ENCODE measurements at regions of chr2 and their contacts with region 1.

Region 1: GRCh38 chr2:197310271-197310985 is at the start of gene ANKRD44:
- DNase-seq: peak; percentile 79 to 94 (median 90)
- H3K4me3 ChIP-seq: peak within 1 kb of the TSS; percentile 59 to 92 (median 78)
- H3K27ac ChIP-seq: peak within 1 kb of the TSS; percentile 57 to 95 (median 87)
- H3K27me3 ChIP-seq: no peaks in the 10 kb centered on the region
- CTCF ChIP-seq: peak in 49 of 56 donors; percentile 23 to 69 (median 51)
- total RNA-seq, gene ANKRD44: 20.2 to 68.1 (median 34.7) TPM

Region 2: GRCh38 chr2:197113275-197113711 is 197.1 kb before region 1 on chr2:
- intact Hi-C with region 1: loop called (anchors 5 to 10 kb)
- DNase-seq: no peak
- H3K4me3 ChIP-seq: no peak overlapping the region
- H3K27ac ChIP-seq: peak overlapping the region in 30 of 59 donors; percentile 0 to 74 (median 26)
- H3K27me3 ChIP-seq: no peaks in the 10 kb centered on the region
- CTCF ChIP-seq: peak; percentile 58 to 91 (median 77)

Region 3: GRCh38 chr2:197130318-197130717 is 180.1 kb before region 1 on chr2:
- intact Hi-C with region 1: loop called in 1 of 2 experiments (anchors 10 kb)
- DNase-seq: no peak
- H3K4me3 ChIP-seq: no peak overlapping the region
- H3K27ac ChIP-seq: peak overlapping the region in 4 of 59 donors; percentile 6 to 25 (median 12)
- H3K27me3 ChIP-seq: no peaks in the 10 kb centered on the region
- CTCF ChIP-seq: no peak

Region 4: DNA sequence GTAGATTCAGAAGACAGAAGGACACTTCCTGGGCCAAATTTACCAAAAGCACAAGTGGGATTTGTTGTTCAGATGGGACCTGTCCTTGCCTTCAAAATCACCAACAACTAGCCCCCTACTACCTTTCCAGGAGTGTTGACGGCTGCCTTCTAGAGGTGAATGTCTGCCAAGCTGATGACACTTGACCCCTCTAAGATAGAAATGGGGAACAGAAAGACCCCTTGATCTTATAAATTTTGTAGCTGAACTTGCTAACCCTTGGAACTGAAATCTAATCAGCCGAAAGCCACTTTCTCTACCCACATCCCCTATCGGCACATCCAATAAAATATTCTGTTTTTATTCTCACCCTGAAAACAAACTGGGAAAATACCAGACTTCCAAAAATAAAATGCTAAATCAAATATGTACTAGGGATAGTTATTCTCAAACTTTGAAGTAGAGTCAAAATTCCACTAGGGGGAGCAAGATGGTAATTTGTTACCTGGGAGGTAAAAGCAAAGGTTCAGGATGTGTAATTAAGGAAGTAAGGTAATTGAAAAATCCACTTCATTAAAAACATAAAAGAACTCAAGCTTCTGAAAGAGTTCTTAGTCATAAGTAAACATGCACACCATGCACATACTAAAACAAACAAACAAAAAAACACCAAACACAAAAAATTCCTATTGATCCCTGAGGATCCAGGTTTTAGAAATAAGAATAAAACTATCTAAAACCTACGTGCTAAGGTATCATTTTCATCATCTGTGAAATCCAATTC is 119.1 kb before region 1 on chr2:
- intact Hi-C with region 1: loop called (anchors 1 to 5 kb)
- DNase-seq: no peak
- H3K4me3 ChIP-seq: no peak overlapping the region
- H3K27ac ChIP-seq: peak overlapping the region in 1 of 59 donors; percentile 6
- H3K27me3 ChIP-seq: no peaks in the 10 kb centered on the region
- CTCF ChIP-seq: peak; percentile 65 to 88 (median 77)

Region 5: DNA sequence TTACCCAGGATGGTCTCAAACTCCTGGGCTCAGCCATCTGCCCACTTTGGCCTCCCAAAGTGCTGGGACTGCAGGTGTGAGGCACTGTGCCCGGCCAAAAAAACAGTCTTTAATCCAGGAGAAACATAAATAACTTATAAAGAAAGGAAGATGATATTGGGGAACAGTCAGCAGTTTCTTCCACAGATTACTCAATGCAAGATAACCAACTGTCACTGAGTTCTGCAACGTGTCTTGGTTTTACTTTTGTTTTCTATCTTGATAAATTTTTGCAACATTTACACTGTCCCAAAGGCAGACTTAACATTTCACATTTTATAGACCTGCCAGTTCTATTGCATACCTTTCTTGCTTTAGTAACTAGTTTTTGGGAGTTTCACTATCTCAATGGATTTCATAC is 71.0 kb before region 1 on chr2:
- intact Hi-C with region 1: loop called in 1 of 2 experiments (anchors 5 kb)
- DNase-seq: no peak
- H3K4me3 ChIP-seq: no peak overlapping the region
- H3K27ac ChIP-seq: peak overlapping the region in 20 of 59 donors; percentile 0 to 63 (median 37)
- H3K27me3 ChIP-seq: no peaks in the 10 kb centered on the region
- CTCF ChIP-seq: no peak

Measured in dorsolateral prefrontal cortex (tissue), 120 donors.